CD8-positive, alpha-beta T cell (primary cell): ENCODE measurements at regions of chr12 and their contacts with region 1.

Region 1: GRCh38 chr12:57751788-57752667 is at the start of gene CDK4:
- DNase-seq: peak; percentile 96 to 100 (median 99)
- ATAC-seq: peak; percentile 78
- H3K4me3 ChIP-seq: peak within 1 kb of the TSS; percentile 80 to 85
- H3K4me3 Mint-ChIP-seq: peak within 1 kb of the TSS; percentile 90
- H3K27ac ChIP-seq: peak within 1 kb of the TSS; percentile 84 to 92
- H3K27ac Mint-ChIP-seq: peak within 1 kb of the TSS; percentile 88
- H3K4me1 ChIP-seq: peaks cover 50% of the 10 kb centered on the region
- H3K4me1 Mint-ChIP-seq: peaks cover 57% of the 10 kb centered on the region
- H3K27me3 ChIP-seq: no peaks in the 10 kb centered on the region
- H3K27me3 Mint-ChIP-seq: no peaks in the 10 kb centered on the region
- CTCF ChIP-seq: no peak
- total RNA-seq, gene CDK4: 8.5 to 10.0 TPM

Region 2: DNA sequence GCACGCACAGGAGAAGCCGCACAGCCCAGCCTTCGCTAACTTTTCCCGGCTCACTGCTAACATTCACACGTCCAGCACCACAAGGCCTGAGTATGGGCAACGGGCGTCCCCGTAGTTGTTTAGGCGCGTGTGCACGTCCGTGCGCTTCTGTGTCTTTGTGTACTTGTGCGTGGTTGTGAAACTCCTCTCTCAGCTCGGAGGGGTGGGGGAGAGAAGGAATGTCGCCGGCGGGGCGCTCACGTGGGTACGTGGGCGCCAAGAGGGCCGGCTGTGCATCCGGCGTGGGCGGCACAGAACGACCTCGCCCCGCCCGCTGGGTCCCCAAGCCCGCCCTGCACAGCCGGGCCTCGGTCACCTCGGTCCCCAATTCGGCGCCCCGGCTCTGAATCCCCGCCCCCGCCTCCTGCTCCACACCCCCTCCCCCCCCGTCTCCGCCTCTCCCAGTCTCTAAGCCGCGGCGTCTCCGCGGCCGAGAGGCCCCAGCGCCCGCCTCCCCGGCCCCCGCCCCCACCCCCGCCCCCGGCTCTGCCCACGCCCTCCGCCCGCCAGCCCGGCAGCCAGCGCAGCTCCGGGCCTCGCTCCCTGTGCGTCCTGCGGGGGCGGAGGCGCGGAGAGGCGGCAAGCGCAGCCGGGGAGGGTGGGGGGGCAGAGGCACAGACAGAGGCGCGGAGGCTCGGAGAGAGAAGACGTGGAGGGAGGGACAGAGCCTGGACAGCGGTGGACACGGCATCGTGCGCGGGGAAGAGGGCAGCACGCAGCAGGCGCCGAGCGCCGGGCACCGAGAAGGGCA is 663.4 kb before region 1 on chr12 and contains the start of gene NAB2:
- CTCF ChIA-PET with region 1: no interaction called
- POLR2A ChIA-PET with region 1: no interaction called
- intact Hi-C with region 1: loop called in 1 of 2 experiments (anchors 5 kb)
- DNase-seq: peak; percentile 87 to 97 (median 95)
- ATAC-seq: peak; percentile 60
- H3K4me3 ChIP-seq: peak within 1 kb of the TSS; percentile 87 to 95
- H3K4me3 Mint-ChIP-seq: peak within 1 kb of the TSS; percentile 92
- H3K27ac ChIP-seq: peak within 1 kb of the TSS; percentile 97 to 100
- H3K27ac Mint-ChIP-seq: peak within 1 kb of the TSS; percentile 95
- H3K4me1 ChIP-seq: peaks cover 47% of the 10 kb centered on the region
- H3K4me1 Mint-ChIP-seq: peaks cover 64% of the 10 kb centered on the region
- H3K27me3 ChIP-seq: no peaks in the 10 kb centered on the region
- H3K27me3 Mint-ChIP-seq: no peaks in the 10 kb centered on the region
- CTCF ChIP-seq: no peak
- total RNA-seq, gene NAB2: 5.9 to 6.7 TPM

Region 3: DNA sequence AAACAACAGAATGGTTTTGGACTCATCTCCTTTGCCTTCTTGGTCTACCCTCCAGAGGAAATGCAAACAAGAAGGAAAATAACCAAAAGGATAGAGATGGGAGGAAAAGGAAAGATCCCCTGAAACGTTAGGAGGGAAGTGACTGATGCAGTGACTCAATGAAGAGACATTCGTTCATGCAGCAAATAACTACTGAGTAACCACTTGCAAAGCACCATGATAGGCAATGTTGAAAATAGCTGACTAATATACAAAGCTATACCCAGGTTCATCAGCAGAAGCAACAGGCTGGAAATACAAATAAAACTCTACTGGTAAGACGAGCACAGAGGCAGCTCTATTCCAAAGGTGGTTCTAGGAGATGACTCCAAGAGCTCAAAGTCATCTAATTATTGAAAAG is 363.0 kb before region 1 on chr12:
- CTCF ChIA-PET with region 1: no interaction called
- POLR2A ChIA-PET with region 1: no interaction called
- intact Hi-C with region 1: no loop called
- DNase-seq: no peak
- ATAC-seq: no peak
- H3K4me3 ChIP-seq: no peak overlapping the region
- H3K4me3 Mint-ChIP-seq: no peak overlapping the region
- H3K27ac ChIP-seq: no peak overlapping the region
- H3K27ac Mint-ChIP-seq: no peak overlapping the region
- H3K4me1 ChIP-seq: no peaks in the 10 kb centered on the region
- H3K4me1 Mint-ChIP-seq: peaks cover 13% of the 10 kb centered on the region
- H3K27me3 ChIP-seq: no peaks in the 10 kb centered on the region
- H3K27me3 Mint-ChIP-seq: no peaks in the 10 kb centered on the region
- CTCF ChIP-seq: no peak

Region 4: DNA sequence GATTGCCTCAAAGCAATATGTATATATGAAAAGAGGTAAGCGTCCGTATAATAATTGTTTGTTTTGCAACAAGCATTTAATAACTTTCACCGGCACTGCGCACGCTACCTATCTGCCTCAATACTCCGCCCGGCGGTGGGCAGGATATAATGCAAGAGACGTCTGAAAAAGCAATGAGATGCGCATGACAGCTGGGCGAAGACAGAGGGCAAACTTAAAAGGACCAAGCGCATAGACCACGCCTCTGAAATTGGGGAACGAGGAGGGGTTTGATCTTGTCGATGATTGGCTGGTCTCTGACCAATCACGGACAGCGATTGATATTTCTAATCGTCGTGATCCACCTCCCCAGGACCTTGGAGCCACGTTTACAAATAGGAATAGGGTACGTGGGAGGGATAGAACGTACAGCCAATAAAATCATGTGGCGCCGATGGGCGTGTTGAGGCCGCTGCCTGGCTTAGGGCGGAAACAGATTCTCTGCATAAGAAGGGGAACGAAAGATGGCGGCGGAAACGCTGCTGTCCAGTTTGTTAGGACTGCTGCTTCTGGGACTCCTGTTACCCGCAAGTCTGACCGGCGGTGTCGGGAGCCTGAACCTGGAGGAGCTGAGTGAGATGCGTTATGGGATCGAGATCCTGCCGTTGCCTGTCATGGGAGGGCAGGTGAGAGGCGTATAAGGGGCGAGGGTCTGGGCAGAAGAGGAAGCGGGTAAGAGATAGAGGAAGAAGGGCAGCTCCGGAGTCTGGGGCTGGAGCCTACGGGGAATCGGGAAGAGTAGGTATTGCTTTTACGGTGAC is 58.2 kb before region 1 on chr12 and contains the start of gene OS9:
- CTCF ChIA-PET with region 1: interaction called, 3 read pairs
- POLR2A ChIA-PET with region 1: interaction called, 4 read pairs
- intact Hi-C with region 1: loop called in 1 of 2 experiments (anchors 2 kb)
- DNase-seq: peak; percentile 89 to 100 (median 92)
- ATAC-seq: peak; percentile 92
- H3K4me3 ChIP-seq: peak within 1 kb of the TSS; percentile 89 to 95
- H3K4me3 Mint-ChIP-seq: no peak within 1 kb of the TSS
- H3K27ac ChIP-seq: peak within 1 kb of the TSS; percentile 77 to 81
- H3K27ac Mint-ChIP-seq: no peak within 1 kb of the TSS
- H3K4me1 ChIP-seq: peaks cover 17% of the 10 kb centered on the region
- H3K4me1 Mint-ChIP-seq: peaks cover 18% of the 10 kb centered on the region
- H3K27me3 ChIP-seq: no peaks in the 10 kb centered on the region
- H3K27me3 Mint-ChIP-seq: peaks cover 5% of the 10 kb centered on the region
- CTCF ChIP-seq: peak; percentile 90
- total RNA-seq, gene OS9: 105 to 119 TPM

Region 5: DNA sequence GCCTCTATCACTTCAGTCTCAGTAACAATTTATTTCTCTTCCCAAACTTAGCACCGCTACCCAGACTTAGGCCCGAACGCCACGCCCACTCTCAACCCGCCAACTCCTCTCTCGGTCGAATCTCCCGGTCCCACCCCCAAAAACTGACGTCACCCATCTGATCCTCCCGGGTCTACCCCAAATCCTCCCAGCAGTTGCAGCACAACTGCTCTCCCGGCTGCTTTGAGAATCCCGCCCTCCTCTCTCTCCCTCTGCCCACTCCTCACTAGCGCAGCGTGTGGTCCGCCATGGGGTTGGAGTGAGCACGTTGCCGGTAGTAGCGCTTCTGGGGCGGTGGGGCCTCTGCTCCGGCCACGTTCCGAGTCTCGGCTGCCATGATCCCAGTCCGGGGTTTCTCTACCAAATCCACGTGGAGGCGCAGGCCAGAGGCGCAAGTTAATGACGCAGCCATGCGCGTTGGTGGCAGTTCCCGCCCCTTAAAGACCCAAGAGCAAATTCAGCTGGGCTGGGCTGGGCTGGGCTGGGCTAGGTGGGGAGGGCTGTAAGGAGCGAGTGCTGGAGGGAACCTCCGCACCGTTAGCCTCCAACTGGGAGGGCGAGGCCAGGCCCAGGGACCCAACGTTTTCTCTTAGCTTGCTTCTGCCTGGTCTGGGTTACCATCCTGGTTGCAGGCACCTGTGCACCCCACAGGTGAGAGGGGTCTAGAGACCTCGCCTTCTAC is 19.8 kb after region 1 on chr12 and contains the start of gene METTL1:
- CTCF ChIA-PET with region 1: interaction called, 16 read pairs
- POLR2A ChIA-PET with region 1: interaction called, 7 read pairs
- intact Hi-C with region 1: loop called in 1 of 2 experiments (anchors 1 kb)
- DNase-seq: peak; percentile 72 to 95 (median 88)
- ATAC-seq: peak; percentile 90
- H3K4me3 ChIP-seq: peak within 1 kb of the TSS; percentile 85 to 87
- H3K4me3 Mint-ChIP-seq: peak within 1 kb of the TSS; percentile 96
- H3K27ac ChIP-seq: peak within 1 kb of the TSS; percentile 81 to 82
- H3K27ac Mint-ChIP-seq: peak within 1 kb of the TSS; percentile 97
- H3K4me1 ChIP-seq: peaks cover 18% of the 10 kb centered on the region
- H3K4me1 Mint-ChIP-seq: peaks cover 17% of the 10 kb centered on the region
- H3K27me3 ChIP-seq: no peaks in the 10 kb centered on the region
- H3K27me3 Mint-ChIP-seq: no peaks in the 10 kb centered on the region
- CTCF ChIP-seq: no peak
- total RNA-seq, gene METTL1: 14.0 to 20.0 TPM

Region 6: GRCh38 chr12:57803319-57803893 is 51.4 kb after region 1 on chr12:
- CTCF ChIA-PET with region 1: interaction called, 10 read pairs
- POLR2A ChIA-PET with region 1: no interaction called
- intact Hi-C with region 1: no loop called
- DNase-seq: peak in 6 of 9 experiments; percentile 11 to 48 (median 40)
- ATAC-seq: peak; percentile 55
- H3K4me3 ChIP-seq: no peak overlapping the region
- H3K4me3 Mint-ChIP-seq: no peak overlapping the region
- H3K27ac ChIP-seq: no peak overlapping the region
- H3K27ac Mint-ChIP-seq: no peak overlapping the region
- H3K4me1 ChIP-seq: no peaks in the 10 kb centered on the region
- H3K4me1 Mint-ChIP-seq: no peaks in the 10 kb centered on the region
- H3K27me3 ChIP-seq: no peaks in the 10 kb centered on the region
- H3K27me3 Mint-ChIP-seq: no peaks in the 10 kb centered on the region
- CTCF ChIP-seq: peak; percentile 71

Region 7: DNA sequence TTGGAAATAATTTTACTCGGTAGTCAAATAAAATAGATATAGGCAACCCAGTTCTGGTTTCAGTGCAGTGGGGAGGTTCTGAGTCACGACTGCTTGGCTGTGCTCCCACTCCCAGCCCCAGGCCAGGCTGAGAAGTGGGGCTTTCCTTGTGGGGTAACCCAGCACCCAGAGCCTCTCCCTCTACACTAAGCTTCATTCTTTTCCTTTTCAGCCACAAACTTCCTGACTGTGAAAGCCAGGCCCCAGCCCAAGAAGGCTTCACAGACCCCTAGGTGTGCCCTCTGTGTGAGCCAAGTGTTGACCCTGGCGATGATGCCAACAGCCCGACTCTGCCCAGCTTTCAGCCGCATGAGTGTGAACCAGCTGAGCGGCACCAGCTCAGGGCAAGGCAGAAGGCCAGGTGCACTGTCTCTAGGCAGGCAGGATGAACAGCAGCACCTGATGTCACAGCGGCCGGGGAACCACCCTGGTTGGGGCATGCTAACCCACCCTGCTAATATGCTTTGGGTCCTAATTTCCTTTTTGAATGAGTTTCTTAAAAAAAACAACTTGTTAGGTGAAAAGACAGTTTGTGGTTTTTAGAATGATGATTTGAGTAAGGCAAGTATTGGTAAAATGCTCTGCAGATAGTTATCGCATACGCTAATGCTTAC is 147.1 kb after region 1 on chr12:
- CTCF ChIA-PET with region 1: interaction called, 33 read pairs
- POLR2A ChIA-PET with region 1: interaction called, 3 read pairs
- intact Hi-C with region 1: no loop called
- DNase-seq: peak; percentile 55 to 95 (median 76)
- ATAC-seq: peak; percentile 89
- H3K4me3 ChIP-seq: no peak overlapping the region
- H3K4me3 Mint-ChIP-seq: peak overlapping the region; percentile 71
- H3K27ac ChIP-seq: peak overlapping the region; percentile 55 to 78
- H3K27ac Mint-ChIP-seq: peak overlapping the region; percentile 99
- H3K4me1 ChIP-seq: peaks cover 45% of the 10 kb centered on the region
- H3K4me1 Mint-ChIP-seq: peaks cover 50% of the 10 kb centered on the region
- H3K27me3 ChIP-seq: no peaks in the 10 kb centered on the region
- H3K27me3 Mint-ChIP-seq: peaks cover 3% of the 10 kb centered on the region
- CTCF ChIP-seq: no peak

Region 8: DNA sequence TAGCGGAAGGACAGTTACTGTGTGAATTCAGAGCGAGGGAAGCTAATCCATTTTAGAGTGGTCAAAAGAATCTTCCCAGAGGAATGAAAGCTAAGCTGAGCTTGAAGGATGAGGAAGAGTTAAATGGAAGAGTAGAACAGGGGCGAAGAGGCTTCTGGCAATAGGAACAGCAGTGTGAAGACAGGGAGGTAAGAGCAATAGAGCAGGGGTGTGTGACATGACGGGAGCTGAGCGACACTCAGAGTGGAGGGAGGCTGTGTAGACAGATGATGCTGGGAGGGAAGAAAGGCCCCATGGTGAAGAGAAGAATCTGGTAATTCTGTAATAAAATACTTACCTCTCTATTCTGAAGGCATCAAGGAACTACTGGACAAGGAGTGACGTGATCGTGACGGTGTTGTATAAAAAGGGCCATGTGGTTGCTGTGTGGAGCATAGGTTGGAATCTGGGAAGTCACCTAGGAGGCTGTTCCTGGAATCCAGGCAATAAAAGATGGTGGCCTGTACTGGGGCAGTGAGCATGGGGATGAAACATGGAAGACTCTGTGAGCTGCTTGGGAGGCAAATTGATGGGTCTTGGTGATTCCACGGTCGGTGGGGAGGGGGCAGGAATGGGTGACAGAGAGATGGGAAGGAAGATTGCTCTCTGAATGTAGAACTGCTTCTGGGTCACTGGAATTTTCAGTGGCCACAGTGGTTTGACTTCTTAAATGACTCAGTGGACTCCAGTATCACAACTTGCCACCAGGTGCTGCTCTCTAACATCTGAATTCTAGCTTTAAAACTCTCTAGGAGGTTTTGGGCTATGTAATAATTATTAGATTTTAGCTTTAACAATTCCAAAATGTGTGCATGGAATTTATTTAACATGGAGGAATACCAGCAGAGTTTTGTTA is 353.4 kb after region 1 on chr12:
- CTCF ChIA-PET with region 1: no interaction called
- POLR2A ChIA-PET with region 1: no interaction called
- intact Hi-C with region 1: no loop called
- DNase-seq: no peak
- ATAC-seq: no peak
- H3K4me3 ChIP-seq: no peak overlapping the region
- H3K4me3 Mint-ChIP-seq: no peak overlapping the region
- H3K27ac ChIP-seq: no peak overlapping the region
- H3K27ac Mint-ChIP-seq: no peak overlapping the region
- H3K4me1 ChIP-seq: no peaks in the 10 kb centered on the region
- H3K4me1 Mint-ChIP-seq: no peaks in the 10 kb centered on the region
- H3K27me3 ChIP-seq: no peaks in the 10 kb centered on the region
- H3K27me3 Mint-ChIP-seq: peaks cover 8% of the 10 kb centered on the region
- CTCF ChIP-seq: no peak